ENCODE measurements at regions of chr5 and their contacts with region 1.

Region 1: GRCh38 chr5:54310433-54311175 is at the start of gene ARL15:
- DNase-seq: peak; percentile 99
- ATAC-seq: peak; percentile 93
- H3K4me3 Mint-ChIP-seq: peak within 1 kb of the TSS; percentile 78
- H3K27ac Mint-ChIP-seq: peak within 1 kb of the TSS; percentile 89
- H3K4me1 Mint-ChIP-seq: peaks cover 19% of the 10 kb centered on the region
- H3K27me3 Mint-ChIP-seq: peaks cover 19% of the 10 kb centered on the region
- total RNA-seq, gene ARL15: 10.6 to 12.6 TPM

Region 2: GRCh38 chr5:54090495-54091084 is 220.0 kb before region 1 on chr5:
- CTCF ChIA-PET with region 1: no interaction called
- DNase-seq: no peak
- ATAC-seq: no peak
- H3K4me3 Mint-ChIP-seq: no peak overlapping the region
- H3K27ac Mint-ChIP-seq: no peak overlapping the region
- H3K4me1 Mint-ChIP-seq: no peaks in the 10 kb centered on the region
- H3K27me3 Mint-ChIP-seq: no peaks in the 10 kb centered on the region

Region 3: DNA sequence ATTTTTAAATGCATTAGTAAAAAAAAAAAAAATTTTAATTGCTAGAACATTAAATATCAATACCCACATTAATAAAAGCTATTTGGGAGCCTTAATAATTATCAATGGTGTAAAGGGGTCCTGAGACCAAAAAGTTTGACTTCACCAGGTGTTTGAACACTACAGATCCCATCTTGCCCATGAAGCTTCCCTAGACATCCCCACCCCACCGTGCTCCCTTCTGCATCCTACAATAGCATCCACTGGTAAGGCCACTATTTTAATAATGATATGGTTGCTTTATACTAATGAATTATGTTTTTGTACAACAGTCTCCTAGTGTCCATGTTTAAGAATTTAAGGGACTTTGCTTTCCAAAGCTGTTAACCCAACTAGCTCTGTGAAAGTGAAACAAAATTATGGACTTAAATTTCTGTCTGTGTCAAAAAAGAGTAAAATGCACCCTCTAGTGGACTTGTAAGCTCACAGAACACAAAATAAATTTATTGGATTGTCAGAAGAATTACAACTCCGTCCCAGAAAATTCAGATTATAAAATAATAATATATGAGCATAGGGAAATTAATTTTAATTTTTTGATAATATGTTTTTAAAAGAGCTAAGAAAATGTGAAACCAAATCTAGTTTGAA is 76.2 kb before region 1 on chr5:
- CTCF ChIA-PET with region 1: interaction called, 12 read pairs
- DNase-seq: no peak
- ATAC-seq: no peak
- H3K4me3 Mint-ChIP-seq: no peak overlapping the region
- H3K27ac Mint-ChIP-seq: no peak overlapping the region
- H3K4me1 Mint-ChIP-seq: peaks cover 3% of the 10 kb centered on the region
- H3K27me3 Mint-ChIP-seq: no peaks in the 10 kb centered on the region

Region 4: DNA sequence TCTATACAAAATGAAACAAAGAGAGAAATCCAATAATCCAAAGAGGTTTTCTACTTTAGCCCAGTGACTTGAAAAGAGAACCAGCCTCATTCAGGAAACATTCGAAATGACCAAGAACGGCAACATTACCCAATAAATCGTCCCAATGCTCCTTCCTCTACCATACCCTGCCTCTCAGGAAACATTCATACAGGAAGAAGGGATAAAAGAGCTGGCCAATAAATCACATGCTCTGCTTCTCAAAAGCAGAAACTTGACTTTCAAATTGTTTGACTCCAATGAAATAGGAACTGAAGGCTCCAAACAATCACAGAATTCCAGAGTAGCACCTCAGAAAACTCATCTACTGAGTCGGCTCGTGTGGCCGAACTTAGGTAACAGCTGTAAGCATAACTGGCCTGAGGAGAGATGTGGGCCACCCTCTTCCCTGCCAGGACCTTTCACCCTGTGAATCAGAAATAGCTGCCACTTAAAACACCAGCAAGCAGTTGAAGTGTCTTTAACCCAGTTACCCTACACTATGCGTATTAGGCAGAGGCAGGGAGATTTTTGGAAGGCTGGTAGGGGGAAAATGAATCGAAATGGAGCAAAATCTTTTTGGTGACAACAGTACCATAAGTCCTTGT is 14.8 kb before region 1 on chr5:
- CTCF ChIA-PET with region 1: no interaction called
- DNase-seq: no peak
- ATAC-seq: no peak
- H3K4me3 Mint-ChIP-seq: no peak overlapping the region
- H3K27ac Mint-ChIP-seq: no peak overlapping the region
- H3K4me1 Mint-ChIP-seq: peaks cover 2% of the 10 kb centered on the region
- H3K27me3 Mint-ChIP-seq: no peaks in the 10 kb centered on the region

Region 5: DNA sequence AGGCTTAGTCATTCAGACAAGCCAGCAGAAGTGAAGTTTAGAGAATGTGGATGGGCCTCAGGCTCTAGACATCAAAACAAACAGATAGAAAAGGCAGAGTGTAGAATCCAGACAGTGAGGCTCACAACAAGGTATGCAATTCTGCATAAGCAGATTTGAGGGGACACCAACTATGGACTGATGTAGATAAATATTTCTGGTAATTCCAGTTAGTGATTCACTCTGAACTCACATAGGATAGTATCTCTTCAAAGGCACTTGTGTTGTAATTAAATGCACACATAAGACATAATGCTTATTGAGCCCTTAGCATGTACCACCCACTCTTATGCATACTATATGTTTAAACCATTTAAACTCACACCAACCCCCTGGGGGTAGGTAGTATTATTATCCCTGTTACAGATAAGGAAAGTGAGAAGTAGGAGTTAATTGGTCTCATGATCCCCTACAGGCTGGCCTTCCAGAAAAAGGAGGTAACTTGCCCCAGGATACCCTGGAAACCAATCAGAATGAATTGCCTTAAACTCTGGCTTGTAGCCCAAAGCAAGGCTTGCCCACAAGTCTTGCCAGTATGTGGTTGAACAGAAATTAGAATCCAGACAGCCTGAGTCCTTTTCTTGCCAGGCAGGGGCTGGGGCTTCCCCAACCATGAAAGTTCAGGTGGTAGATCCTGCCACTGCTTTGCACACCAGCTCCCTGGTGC is 105.4 kb after region 1 on chr5:
- CTCF ChIA-PET with region 1: interaction called, 11 read pairs
- DNase-seq: no peak
- ATAC-seq: no peak
- H3K4me3 Mint-ChIP-seq: no peak overlapping the region
- H3K27ac Mint-ChIP-seq: no peak overlapping the region
- H3K4me1 Mint-ChIP-seq: no peaks in the 10 kb centered on the region
- H3K27me3 Mint-ChIP-seq: peaks cover 22% of the 10 kb centered on the region